Dorsolateral prefrontal cortex (tissue), 120 donors: ENCODE measurements at regions of chr1 and their contacts with region 1.

Region 1: GRCh38 chr1:220272047-220272840 is at the start of gene RAB3GAP2:
- DNase-seq: peak; percentile 80 to 96 (median 92)
- H3K4me3 ChIP-seq: peak within 1 kb of the TSS; percentile 47 to 99 (median 93)
- H3K27ac ChIP-seq: peak within 1 kb of the TSS in 55 of 59 donors; percentile 36 to 92 (median 78)
- H3K27me3 ChIP-seq: no peaks in the 10 kb centered on the region
- CTCF ChIP-seq: peak in 33 of 56 donors; percentile 7 to 55 (median 29)
- total RNA-seq, gene RAB3GAP2: 35.9 to 76.7 (median 50.9) TPM

Region 2: DNA sequence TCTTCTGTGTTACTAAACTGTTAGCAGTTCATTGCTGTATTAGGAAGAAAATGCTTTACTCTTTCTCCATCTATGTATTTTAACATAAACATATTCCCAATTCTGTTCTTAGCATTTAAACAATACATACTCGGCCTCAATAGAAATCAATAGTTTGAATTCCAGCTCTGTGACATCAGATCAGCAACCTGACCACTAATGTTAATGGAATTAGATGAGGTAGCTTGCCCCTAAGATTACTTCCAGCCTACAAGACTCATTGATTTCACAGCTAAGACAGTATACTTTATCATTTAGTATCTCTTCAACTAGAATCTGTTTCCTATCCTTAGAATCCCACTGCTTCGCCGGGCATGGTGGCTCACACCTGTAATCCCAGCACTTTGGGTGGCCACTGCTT is 264.8 kb before region 1 on chr1:
- intact Hi-C with region 1: no loop called
- DNase-seq: no peak
- H3K4me3 ChIP-seq: no peak overlapping the region
- H3K27ac ChIP-seq: peak overlapping the region in 2 of 59 donors; percentile 1 to 21
- H3K27me3 ChIP-seq: no peaks in the 10 kb centered on the region
- CTCF ChIP-seq: no peak

Region 3: GRCh38 chr1:220089650-220090556 is 182.3 kb before region 1 on chr1 and contains the start of gene BPNT1:
- intact Hi-C with region 1: loop called in 1 of 2 experiments (anchors 2 kb)
- DNase-seq: peak; percentile 86 to 95 (median 90)
- H3K4me3 ChIP-seq: peak within 1 kb of the TSS; percentile 53 to 91 (median 74)
- H3K27ac ChIP-seq: peak within 1 kb of the TSS in 55 of 59 donors; percentile 10 to 89 (median 76)
- H3K27me3 ChIP-seq: no peaks in the 10 kb centered on the region
- CTCF ChIP-seq: peak in 21 of 56 donors; percentile 7 to 58 (median 31)
- total RNA-seq, gene BPNT1: 12.4 to 30.8 (median 19.7) TPM

Region 4: GRCh38 chr1:220241072-220241663 is 31.1 kb before region 1 on chr1:
- intact Hi-C with region 1: no loop called
- DNase-seq: no peak
- H3K4me3 ChIP-seq: no peak overlapping the region
- H3K27ac ChIP-seq: no peak overlapping the region
- H3K27me3 ChIP-seq: no peaks in the 10 kb centered on the region
- CTCF ChIP-seq: no peak

Region 5: DNA sequence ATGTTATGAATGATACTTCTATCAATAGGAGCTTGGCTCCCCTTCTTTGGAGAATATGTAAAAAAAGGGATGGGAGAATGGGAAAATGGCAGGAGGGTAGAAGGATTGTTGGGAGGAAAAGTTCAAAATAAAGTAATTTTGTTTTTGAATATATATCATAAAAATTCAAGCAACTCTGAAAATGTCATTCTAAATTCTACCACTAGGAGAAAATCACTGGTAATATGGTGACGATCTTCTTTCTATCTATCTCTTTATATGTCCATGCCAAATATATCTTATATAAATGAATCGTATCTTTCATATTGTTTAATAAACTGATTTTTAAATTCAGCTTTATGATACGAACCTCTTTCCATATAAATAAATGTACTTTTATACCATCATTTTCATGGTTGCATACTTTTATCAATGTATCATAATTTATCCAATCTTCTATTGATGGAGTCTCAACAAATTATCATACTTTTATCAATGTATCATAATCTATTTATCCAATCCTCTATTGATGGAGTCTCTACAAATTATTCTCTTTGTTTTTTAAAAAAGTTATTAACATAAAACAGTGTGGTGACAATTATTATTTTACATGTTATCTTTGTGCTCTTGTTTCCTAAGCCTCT is 182.0 kb after region 1 on chr1:
- intact Hi-C with region 1: no loop called
- DNase-seq: no peak
- H3K4me3 ChIP-seq: no peak overlapping the region
- H3K27ac ChIP-seq: no peak overlapping the region
- H3K27me3 ChIP-seq: peaks cover 0 to 12% (median 0%) of the 10 kb centered on the region in 45 donors
- CTCF ChIP-seq: peak in 29 of 56 donors; percentile 11 to 52 (median 33)

Region 6: DNA sequence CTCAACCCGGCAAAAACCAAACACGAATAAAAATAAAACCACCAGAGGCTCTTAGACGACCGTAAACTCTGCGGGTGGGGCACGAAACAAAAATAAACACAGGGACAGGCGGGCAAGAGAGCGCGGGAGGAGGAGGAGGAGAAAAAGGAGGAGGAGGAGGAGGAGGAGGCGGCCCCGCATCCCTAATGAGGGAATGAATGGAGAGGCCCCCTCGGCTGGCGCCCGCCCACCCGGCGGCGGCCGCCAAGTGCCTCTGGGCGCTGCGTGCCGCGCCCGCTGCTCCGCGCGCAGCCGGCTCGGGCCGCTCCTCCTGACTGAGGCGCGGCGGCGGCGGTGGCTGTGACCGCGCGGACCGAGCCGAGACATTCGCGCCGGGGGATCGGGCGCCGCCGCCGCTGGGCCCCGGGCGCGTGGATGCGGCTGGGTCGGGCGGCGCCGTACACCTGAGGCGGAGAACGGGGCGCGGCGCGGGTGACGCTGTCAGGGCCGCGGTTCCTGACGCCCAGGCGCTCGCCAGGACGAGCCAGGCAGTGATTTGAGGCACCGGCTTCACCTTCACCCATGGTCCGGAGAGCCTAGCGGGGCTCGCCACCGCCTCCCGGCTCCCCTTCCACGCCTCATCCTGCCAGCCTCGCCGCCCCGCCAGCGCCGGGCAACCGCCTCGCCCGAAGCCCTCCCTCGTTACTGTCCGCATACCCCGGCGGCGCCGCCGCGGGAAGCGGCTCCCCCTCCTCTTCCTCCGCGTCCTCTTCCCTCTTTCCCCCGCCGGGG is 255.8 kb after region 1 on chr1 and contains the start of gene MARK1:
- intact Hi-C with region 1: loop called (anchors 2 to 10 kb)
- DNase-seq: peak; percentile 25 to 80 (median 56)
- H3K4me3 ChIP-seq: peak within 1 kb of the TSS; percentile 62 to 96 (median 80)
- H3K27ac ChIP-seq: peak within 1 kb of the TSS; percentile 15 to 95 (median 89)
- H3K27me3 ChIP-seq: peaks cover 0 to 10% (median 0%) of the 10 kb centered on the region in 45 donors
- CTCF ChIP-seq: no peak
- total RNA-seq, gene MARK1: 13.1 to 44.7 (median 30.9) TPM